ENCODE measurements at regions of chr2 and their contacts with region 1.

Region 1: DNA sequence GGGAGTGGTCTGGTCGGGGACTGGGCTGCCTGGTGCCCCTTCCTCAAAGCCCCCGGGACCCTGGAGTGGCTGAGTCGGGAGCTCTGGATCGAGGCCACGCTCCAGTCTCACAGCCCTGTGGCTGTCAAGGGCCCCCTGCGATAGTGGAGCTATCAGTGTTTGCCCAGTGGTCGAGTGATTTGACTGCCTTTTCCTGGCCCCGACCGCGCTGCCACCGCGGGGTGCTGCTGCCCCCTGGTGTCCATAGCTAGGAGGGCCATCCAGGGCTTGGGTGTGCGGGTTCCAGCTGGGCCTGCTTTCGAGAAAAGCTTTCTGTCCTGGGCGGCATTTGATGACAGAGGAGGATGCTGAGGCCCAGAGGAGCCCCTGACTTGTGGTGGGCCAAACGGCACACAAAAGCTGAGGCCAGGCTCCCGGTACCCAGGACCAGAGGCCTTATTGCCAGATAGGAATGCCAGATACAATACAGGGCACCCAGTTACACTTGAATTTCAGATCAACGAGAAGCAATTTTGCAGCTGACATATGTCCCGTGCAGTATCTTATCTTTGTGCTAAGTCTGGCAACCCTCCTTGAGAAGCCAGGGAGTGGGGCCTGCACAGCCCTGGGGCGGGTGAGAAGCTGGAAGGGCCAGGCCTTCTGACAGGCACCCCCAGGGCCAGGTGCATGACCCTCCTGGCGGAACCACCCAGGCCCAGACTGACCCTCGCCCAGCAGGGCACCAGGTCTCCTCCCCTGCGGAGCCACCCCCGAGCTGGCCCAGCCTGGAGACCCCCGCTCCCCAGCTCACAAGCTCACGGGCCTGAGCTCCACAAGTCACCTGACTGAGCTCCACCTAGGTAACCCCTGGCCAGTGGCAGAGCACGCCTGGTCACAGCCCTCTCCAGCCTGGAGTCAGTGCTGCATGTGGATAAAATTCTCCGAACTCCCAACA is 13.0 kb downstream of the ODC1 start:
- DNase-seq: peak; percentile 85
- ATAC-seq: peak; percentile 56
- H3K4me3 Mint-ChIP-seq: no peak overlapping the region
- H3K27ac Mint-ChIP-seq: no peak overlapping the region
- H3K4me1 Mint-ChIP-seq: peaks cover 11% of the 10 kb centered on the region
- H3K27me3 Mint-ChIP-seq: peaks cover 6% of the 10 kb centered on the region

Region 2: DNA sequence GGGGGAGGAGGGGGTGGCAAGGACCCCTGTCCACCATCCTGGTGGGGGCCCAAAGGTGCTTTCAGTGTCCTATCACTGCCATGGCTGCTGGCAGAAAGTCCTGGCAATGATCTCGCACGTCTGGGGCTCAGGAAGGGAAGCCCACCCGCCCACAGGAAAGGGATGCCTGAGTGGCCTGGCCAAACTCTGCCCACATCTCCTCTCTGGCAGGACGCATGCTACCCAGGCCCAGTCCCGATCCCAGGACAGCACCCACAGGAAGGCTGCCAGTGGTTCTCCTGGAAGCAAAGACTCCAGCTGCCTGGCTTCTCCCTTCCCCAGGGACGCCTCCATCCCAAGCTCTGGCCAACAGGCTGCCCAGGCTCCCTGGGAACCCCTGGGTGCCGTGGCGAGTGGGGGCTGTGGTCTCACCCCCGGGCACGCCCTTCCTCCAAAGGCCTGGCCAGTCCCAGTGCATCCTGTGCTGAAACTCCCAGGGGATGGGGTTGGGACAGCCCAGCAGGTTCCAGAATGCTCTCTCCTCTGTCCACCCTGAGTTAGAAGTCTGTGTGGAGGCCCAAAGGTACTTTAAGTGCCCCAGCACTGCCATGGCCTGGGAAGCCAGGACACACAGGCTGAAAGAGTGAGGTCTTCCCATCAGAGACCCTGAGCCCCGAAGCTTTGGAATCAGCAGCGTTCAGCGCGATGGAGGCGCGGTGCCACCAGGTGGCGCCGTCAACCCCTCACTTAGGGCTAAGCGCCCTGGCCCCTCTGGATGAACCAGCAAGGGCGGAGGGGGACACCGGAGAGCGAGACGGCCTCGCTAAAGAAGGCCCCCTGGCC is 621.6 kb before region 1 on chr2:
- CTCF ChIA-PET with region 1: interaction called, 3 read pairs
- POLR2A ChIA-PET with region 1: no interaction called
- intact Hi-C with region 1: loop called (anchors 10 kb)
- DNase-seq: peak; percentile 84
- ATAC-seq: peak; percentile 90
- H3K4me3 Mint-ChIP-seq: no peak overlapping the region
- H3K27ac Mint-ChIP-seq: no peak overlapping the region
- H3K4me1 Mint-ChIP-seq: peaks cover 9% of the 10 kb centered on the region
- H3K27me3 Mint-ChIP-seq: peaks cover 3% of the 10 kb centered on the region

Region 3: DNA sequence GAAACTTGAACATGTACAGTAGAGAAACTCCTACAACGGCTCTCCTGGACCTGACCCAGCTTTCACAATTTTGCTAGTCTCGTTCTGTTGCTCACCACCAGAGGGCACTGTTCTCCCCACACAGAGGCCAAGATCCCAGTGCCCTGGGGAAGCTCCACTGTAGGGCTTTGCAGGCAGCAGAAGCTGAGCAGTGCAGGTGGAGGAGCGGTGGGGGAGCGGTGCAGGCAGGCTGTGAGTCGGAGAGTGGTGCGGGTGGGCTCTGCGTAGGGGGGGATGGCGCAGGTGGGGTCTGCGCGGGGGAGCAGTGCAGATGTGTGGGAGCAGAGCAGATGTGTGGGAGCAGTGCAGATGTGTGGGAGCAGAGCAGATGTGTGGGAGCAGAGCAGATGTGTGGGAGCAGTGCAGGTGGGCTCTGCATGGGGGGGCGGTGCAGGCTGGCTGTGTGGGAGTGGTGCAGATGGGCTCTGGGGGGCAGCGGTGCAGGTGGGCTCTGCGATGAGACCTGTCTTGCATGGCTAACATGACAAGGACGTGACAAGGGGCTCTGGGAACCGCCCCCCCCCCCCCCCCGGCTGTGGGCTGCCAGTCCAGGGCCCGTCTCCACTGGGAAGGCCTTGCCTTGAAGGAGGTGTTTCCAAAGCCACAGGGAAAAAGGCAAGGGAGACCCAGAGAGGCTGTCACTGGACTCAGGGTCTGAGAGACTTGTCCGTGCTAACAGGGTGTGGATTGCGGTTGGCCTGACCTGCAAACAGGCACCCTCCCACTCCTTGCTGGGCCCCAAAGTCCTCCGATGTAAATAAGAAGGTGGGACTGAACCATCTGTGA is 362.3 kb before region 1 on chr2:
- CTCF ChIA-PET with region 1: interaction called, 142 read pairs
- POLR2A ChIA-PET with region 1: interaction called, 9 read pairs
- intact Hi-C with region 1: loop called (anchors 1 kb)
- DNase-seq: peak; percentile 86
- ATAC-seq: peak; percentile 97
- H3K4me3 Mint-ChIP-seq: no peak overlapping the region
- H3K27ac Mint-ChIP-seq: no peak overlapping the region
- H3K4me1 Mint-ChIP-seq: no peaks in the 10 kb centered on the region
- H3K27me3 Mint-ChIP-seq: peaks cover 38% of the 10 kb centered on the region

Region 4: DNA sequence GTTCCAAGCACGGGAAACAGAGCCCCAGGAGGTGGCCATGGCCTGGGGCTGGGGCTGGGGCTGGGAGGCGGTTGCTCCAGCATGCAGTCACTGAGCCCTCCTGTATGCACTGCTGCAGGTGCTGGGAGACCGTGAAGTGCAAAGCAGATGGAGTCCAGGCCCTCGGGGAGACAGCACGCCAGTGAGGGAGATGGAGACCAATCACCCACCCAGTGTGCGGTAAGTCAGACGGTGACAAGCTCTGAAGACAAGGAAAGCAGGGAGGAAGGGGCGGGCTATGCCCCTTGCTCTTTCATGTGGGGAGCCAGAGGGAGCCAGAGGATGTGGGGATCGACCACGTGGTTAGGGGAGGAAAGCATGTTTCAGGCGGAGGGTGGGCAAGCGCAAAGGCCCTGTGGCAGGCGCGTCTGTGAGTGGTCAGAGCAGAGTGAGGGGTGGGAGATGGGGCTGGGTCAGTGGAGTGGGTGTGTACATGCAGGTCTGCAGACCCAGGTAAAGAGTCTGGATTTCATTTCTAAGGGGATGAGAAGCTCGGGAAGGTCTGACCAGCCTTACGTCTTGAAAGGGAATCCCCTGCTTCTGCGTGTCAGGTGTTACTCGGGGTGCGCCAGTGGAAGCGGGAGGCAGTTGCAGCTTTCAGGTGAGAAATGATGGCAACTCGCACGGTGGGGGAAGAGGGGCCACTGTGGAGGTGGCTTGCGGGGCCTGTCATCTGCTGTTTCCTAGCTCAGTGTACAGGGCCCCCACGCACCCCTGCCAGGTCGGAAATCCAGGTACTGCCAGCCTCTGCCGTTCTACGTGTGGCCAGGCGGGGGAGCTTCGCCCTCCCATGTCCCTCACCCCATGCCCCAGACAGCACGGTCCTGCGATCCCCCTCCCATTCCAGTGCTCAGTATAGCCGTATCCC is 293.2 kb before region 1 on chr2:
- CTCF ChIA-PET with region 1: interaction called, 24 read pairs
- POLR2A ChIA-PET with region 1: interaction called, 4 read pairs
- intact Hi-C with region 1: loop called (anchors 1 to 5 kb)
- DNase-seq: peak; percentile 67
- ATAC-seq: peak; percentile 74
- H3K4me3 Mint-ChIP-seq: no peak overlapping the region
- H3K27ac Mint-ChIP-seq: no peak overlapping the region
- H3K4me1 Mint-ChIP-seq: peaks cover 26% of the 10 kb centered on the region
- H3K27me3 Mint-ChIP-seq: no peaks in the 10 kb centered on the region

Region 5: GRCh38 chr2:10269711-10270610 is 165.2 kb before region 1 on chr2:
- CTCF ChIA-PET with region 1: interaction called, 11 read pairs
- POLR2A ChIA-PET with region 1: no interaction called
- intact Hi-C with region 1: loop called in 1 of 2 experiments (anchors 1 kb)
- DNase-seq: no peak
- ATAC-seq: no peak
- H3K4me3 Mint-ChIP-seq: no peak overlapping the region
- H3K27ac Mint-ChIP-seq: no peak overlapping the region
- H3K4me1 Mint-ChIP-seq: peaks cover 6% of the 10 kb centered on the region
- H3K27me3 Mint-ChIP-seq: no peaks in the 10 kb centered on the region